ENCODE measurements at regions of chr5 and their contacts with region 1.

Region 1: DNA sequence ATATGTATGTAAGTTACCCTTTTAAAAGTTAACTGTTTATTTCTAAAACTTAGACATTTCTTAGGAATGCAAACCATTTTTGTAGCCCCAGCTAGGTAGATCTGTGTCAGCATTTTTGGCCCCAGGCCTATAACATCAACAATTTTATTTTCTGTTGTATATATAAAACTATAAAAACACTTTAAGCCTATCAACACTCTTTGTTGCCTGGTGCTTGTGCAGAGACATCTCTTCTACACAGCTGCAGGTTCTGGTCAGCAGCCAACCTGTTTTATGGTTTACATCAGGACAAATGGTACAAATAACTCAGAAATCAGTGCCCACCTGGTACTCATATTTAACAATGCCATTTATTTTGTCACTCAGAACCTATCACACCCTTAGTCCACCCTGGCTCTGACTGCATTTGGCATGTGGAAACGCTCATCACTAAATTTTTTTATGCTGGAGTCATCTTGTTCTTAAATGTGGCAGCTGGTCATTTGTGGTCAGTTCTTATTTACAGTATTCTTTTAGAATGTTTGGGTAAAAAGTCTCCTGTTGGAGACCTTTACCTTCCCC is 173.4 kb downstream of the DNAH5 start:
- DNase-seq: no peak
- ATAC-seq: no peak
- H3K4me3 ChIP-seq: no peak overlapping the region
- H3K4me3 Mint-ChIP-seq: no peak overlapping the region
- H3K27ac ChIP-seq: no peak overlapping the region
- H3K27ac Mint-ChIP-seq: no peak overlapping the region
- H3K4me1 ChIP-seq: no peaks in the 10 kb centered on the region
- H3K4me1 Mint-ChIP-seq: no peaks in the 10 kb centered on the region
- H3K27me3 ChIP-seq: no peaks in the 10 kb centered on the region
- H3K27me3 Mint-ChIP-seq: no peaks in the 10 kb centered on the region
- CTCF ChIP-seq: no peak

Region 2: DNA sequence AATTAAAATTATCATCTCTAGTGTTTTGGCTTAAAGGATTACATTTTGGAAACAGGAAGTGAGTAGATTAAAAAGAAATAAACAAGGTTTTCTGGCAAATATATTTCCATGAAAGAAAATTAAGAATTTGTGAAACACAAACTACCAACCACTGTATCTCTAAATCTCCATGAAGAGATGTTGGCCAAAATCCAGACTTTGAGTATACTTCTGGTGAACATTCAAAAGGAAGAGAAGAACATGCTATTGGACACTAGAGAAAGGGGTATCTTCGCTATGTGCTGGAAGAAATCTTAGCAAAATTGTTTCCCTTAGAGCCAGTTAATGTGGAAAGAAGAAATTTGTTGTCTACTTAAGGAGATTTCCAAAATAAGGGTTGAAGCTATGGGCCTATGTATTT is 1156.5 kb before region 1 on chr5:
- CTCF ChIA-PET with region 1: no interaction called
- POLR2A ChIA-PET with region 1: no interaction called
- intact Hi-C with region 1: loop called in 1 of 2 experiments (anchors 5 kb)
- DNase-seq: no peak
- ATAC-seq: no peak
- H3K4me3 ChIP-seq: no peak overlapping the region
- H3K4me3 Mint-ChIP-seq: no peak overlapping the region
- H3K27ac ChIP-seq: no peak overlapping the region
- H3K27ac Mint-ChIP-seq: no peak overlapping the region
- H3K4me1 ChIP-seq: no peaks in the 10 kb centered on the region
- H3K4me1 Mint-ChIP-seq: no peaks in the 10 kb centered on the region
- H3K27me3 ChIP-seq: no peaks in the 10 kb centered on the region
- H3K27me3 Mint-ChIP-seq: no peaks in the 10 kb centered on the region
- CTCF ChIP-seq: no peak

Region 3: GRCh38 chr5:13758737-13759136 is 12.4 kb before region 1 on chr5:
- CTCF ChIA-PET with region 1: no interaction called
- POLR2A ChIA-PET with region 1: no interaction called
- intact Hi-C with region 1: no loop called
- DNase-seq: no peak
- ATAC-seq: no peak
- H3K4me3 ChIP-seq: no peak overlapping the region
- H3K4me3 Mint-ChIP-seq: no peak overlapping the region
- H3K27ac ChIP-seq: no peak overlapping the region
- H3K27ac Mint-ChIP-seq: no peak overlapping the region
- H3K4me1 ChIP-seq: no peaks in the 10 kb centered on the region
- H3K4me1 Mint-ChIP-seq: no peaks in the 10 kb centered on the region
- H3K27me3 ChIP-seq: no peaks in the 10 kb centered on the region
- H3K27me3 Mint-ChIP-seq: no peaks in the 10 kb centered on the region
- CTCF ChIP-seq: no peak

Region 4: DNA sequence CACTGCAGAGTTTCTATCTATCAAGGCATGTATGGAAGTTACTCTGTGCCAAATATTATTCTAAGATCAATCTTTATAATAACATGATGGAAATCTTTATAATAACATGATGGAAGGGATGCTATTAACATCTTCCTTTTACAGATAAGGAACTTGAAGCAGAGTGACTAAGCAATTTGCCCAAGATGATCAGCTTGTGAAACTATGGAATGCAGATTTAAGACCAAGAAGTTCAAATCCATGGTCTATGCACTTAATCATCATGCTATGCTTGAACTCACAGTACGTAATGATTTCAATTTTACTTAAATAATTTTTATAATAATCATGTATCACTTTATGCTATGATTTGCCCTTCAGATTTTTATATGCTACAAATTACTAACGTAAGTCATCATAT is 50.3 kb after region 1 on chr5:
- CTCF ChIA-PET with region 1: no interaction called
- POLR2A ChIA-PET with region 1: no interaction called
- intact Hi-C with region 1: loop called in 1 of 2 experiments (anchors 1 kb)
- DNase-seq: no peak
- ATAC-seq: no peak
- H3K4me3 ChIP-seq: no peak overlapping the region
- H3K4me3 Mint-ChIP-seq: no peak overlapping the region
- H3K27ac ChIP-seq: no peak overlapping the region
- H3K27ac Mint-ChIP-seq: no peak overlapping the region
- H3K4me1 ChIP-seq: no peaks in the 10 kb centered on the region
- H3K4me1 Mint-ChIP-seq: no peaks in the 10 kb centered on the region
- H3K27me3 ChIP-seq: no peaks in the 10 kb centered on the region
- H3K27me3 Mint-ChIP-seq: no peaks in the 10 kb centered on the region
- CTCF ChIP-seq: no peak

Region 5: DNA sequence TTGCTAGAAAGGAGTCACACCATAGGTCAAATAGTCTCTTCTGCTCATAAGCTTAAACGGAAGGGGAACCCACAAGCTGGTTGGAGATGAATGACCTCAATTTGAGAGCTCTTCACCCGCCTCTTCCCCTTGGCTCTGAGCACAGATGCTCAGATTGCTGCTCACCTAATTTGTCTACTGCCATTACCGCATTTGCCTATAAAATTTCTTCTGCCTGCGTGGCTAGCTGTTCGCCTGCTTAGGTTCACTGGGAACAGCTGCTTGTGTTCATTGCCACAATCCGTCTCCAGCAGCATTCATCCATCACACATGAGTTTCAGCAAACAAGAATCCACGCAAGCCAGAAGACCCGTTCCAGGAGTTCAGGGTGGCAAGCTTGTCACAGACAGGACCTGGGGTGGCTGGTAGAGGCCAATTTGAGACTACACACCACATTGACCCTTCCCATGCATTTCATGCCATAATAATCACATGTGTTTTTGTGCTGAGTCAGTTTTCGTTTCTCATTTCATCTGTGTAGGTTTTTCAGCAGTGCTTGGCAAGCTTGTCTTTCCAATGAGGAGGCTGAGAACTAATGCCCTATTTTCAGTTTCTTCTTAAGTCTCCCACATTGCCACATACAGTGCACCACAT is 223.6 kb after region 1 on chr5:
- CTCF ChIA-PET with region 1: no interaction called
- POLR2A ChIA-PET with region 1: no interaction called
- intact Hi-C with region 1: no loop called
- DNase-seq: no peak
- ATAC-seq: no peak
- H3K4me3 ChIP-seq: no peak overlapping the region
- H3K4me3 Mint-ChIP-seq: no peak overlapping the region
- H3K27ac ChIP-seq: no peak overlapping the region
- H3K27ac Mint-ChIP-seq: no peak overlapping the region
- H3K4me1 ChIP-seq: no peaks in the 10 kb centered on the region
- H3K4me1 Mint-ChIP-seq: no peaks in the 10 kb centered on the region
- H3K27me3 ChIP-seq: peaks cover 0 to 2% of the 10 kb centered on the region in 2 experiments
- H3K27me3 Mint-ChIP-seq: no peaks in the 10 kb centered on the region
- CTCF ChIP-seq: no peak